Adrenal gland (tissue), 19 donors: ENCODE measurements at regions of chr19 and their contacts with region 1.

Region 1: GRCh38 chr19:12272980-12273901 is 21.4 kb downstream of the ZNF44 start:
- DNase-seq: no peak
- H3K4me3 ChIP-seq: peak overlapping the region in 1 of 4 donors; percentile 14
- H3K27ac ChIP-seq: no peak overlapping the region
- H3K4me1 ChIP-seq: no peaks in the 10 kb centered on the region
- H3K27me3 ChIP-seq: no peaks in the 10 kb centered on the region
- CTCF ChIP-seq: no peak
- POLR2A ChIP-seq: no peak

Region 2: GRCh38 chr19:12527034-12527836 is 254.0 kb after region 1 on chr19:
- intact Hi-C with region 1: loop called in 1 of 2 experiments (anchors 10 kb)
- DNase-seq: no peak
- H3K4me3 ChIP-seq: peak overlapping the region in 1 of 4 donors; percentile 27
- H3K27ac ChIP-seq: no peak overlapping the region
- H3K4me1 ChIP-seq: no peaks in the 10 kb centered on the region
- H3K27me3 ChIP-seq: no peaks in the 10 kb centered on the region
- CTCF ChIP-seq: no peak
- POLR2A ChIP-seq: no peak